ENCODE measurements at regions of chr2 and their contacts with region 1.

Region 1: GRCh38 chr2:54899576-54900200 is 150.6 kb downstream of the RTN4 start:
- DNase-seq: peak in 5 of 9 donors; percentile 6 to 40 (median 16)
- ATAC-seq: peak; percentile 31
- H3K4me3 ChIP-seq: no peak overlapping the region
- H3K4me3 Mint-ChIP-seq: no peak overlapping the region
- H3K27ac ChIP-seq: no peak overlapping the region
- H3K27ac Mint-ChIP-seq: peak overlapping the region in 4 of 9 donors; percentile 9 to 89 (median 72)
- H3K4me1 ChIP-seq: peaks cover 10 to 19% of the 10 kb centered on the region in 2 donors
- H3K4me1 Mint-ChIP-seq: peaks cover 13 to 32% (median 29%) of the 10 kb centered on the region in 7 donors
- H3K27me3 ChIP-seq: no peaks in the 10 kb centered on the region
- H3K27me3 Mint-ChIP-seq: no peaks in the 10 kb centered on the region

Region 2: GRCh38 chr2:54409752-54410151 is 489.9 kb before region 1 on chr2:
- CTCF ChIA-PET with region 1: no interaction called
- POLR2A ChIA-PET with region 1: no interaction called
- intact Hi-C with region 1: no loop called
- DNase-seq: no peak
- ATAC-seq: no peak
- H3K4me3 ChIP-seq: no peak overlapping the region
- H3K4me3 Mint-ChIP-seq: no peak overlapping the region
- H3K27ac ChIP-seq: no peak overlapping the region
- H3K27ac Mint-ChIP-seq: no peak overlapping the region
- H3K4me1 ChIP-seq: no peaks in the 10 kb centered on the region
- H3K4me1 Mint-ChIP-seq: no peaks in the 10 kb centered on the region
- H3K27me3 ChIP-seq: peaks cover 0 to 3% of the 10 kb centered on the region in 2 donors
- H3K27me3 Mint-ChIP-seq: peaks cover 11 to 23% (median 19%) of the 10 kb centered on the region in 5 donors

Region 3: GRCh38 chr2:54866868-54867267 is 32.8 kb before region 1 on chr2:
- CTCF ChIA-PET with region 1: no interaction called
- POLR2A ChIA-PET with region 1: no interaction called
- intact Hi-C with region 1: loop called in 1 of 2 experiments (anchors 2 kb)
- DNase-seq: peak in 1 of 9 donors; percentile 5
- ATAC-seq: peak; percentile 36
- H3K4me3 ChIP-seq: no peak overlapping the region
- H3K4me3 Mint-ChIP-seq: peak overlapping the region in 7 of 10 donors; percentile 3 to 32 (median 17)
- H3K27ac ChIP-seq: no peak overlapping the region
- H3K27ac Mint-ChIP-seq: peak overlapping the region in 7 of 9 donors; percentile 1 to 77 (median 16)
- H3K4me1 ChIP-seq: peaks cover 0 to 13% of the 10 kb centered on the region in 2 donors
- H3K4me1 Mint-ChIP-seq: peaks cover 6 to 20% (median 14%) of the 10 kb centered on the region in 7 donors
- H3K27me3 ChIP-seq: no peaks in the 10 kb centered on the region
- H3K27me3 Mint-ChIP-seq: no peaks in the 10 kb centered on the region

Region 4: DNA sequence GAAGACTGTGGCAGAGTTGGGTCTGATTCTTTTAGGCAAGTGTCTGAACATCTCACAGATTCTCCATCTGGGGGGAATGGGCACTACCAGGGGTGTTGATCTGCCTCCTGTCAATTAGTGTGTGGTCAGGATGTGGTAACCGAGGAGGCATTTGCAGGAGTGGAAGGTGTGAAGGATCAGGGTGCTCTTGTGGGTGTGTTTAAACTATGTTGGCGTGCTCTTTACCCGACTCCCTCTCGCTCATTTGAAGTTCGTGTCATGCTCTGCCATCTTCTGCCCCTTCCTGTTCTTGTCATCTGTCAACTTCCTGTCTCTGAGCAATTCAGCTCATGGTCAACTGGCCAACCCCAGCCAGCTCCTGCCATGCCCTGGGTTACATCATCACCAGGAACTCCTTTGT is 42.7 kb after region 1 on chr2:
- CTCF ChIA-PET with region 1: no interaction called
- POLR2A ChIA-PET with region 1: no interaction called
- intact Hi-C with region 1: loop called in 1 of 2 experiments (anchors 5 kb)
- DNase-seq: peak in 6 of 9 donors; percentile 17 to 61 (median 30)
- ATAC-seq: peak; percentile 85
- H3K4me3 ChIP-seq: no peak overlapping the region
- H3K4me3 Mint-ChIP-seq: no peak overlapping the region
- H3K27ac ChIP-seq: no peak overlapping the region
- H3K27ac Mint-ChIP-seq: no peak overlapping the region
- H3K4me1 ChIP-seq: peaks cover 8 to 16% of the 10 kb centered on the region in 2 donors
- H3K4me1 Mint-ChIP-seq: peaks cover 0 to 12% (median 4%) of the 10 kb centered on the region in 7 donors
- H3K27me3 ChIP-seq: no peaks in the 10 kb centered on the region
- H3K27me3 Mint-ChIP-seq: peaks cover 0 to 4% (median 0%) of the 10 kb centered on the region in 5 donors

Region 5: DNA sequence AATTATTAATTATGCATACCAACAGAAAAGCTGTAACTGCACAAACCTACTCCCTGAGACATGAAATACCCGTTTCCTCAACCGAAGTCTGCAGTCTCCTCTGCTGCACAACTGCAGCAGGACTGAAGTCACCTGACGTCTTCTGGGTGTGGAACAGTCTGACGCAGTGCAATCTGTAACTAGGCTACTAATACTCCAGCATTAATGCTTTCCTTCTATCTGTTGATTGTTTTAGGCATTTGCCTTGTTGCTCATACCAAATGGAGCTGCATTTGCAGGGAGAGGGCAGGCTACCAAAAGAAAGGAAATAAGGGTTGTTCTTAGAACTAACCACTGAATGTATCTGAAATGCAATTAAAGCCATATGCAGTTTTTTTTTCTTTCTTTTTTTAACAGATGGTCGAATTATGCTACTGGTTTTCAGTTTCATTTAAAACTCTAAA is 110.5 kb after region 1 on chr2:
- CTCF ChIA-PET with region 1: interaction called, 11 read pairs
- POLR2A ChIA-PET with region 1: interaction called, 3 read pairs
- intact Hi-C with region 1: loop called (anchors 2 kb)
- DNase-seq: peak; percentile 15 to 71 (median 60)
- ATAC-seq: peak; percentile 94
- H3K4me3 ChIP-seq: peak overlapping the region; percentile 58
- H3K4me3 Mint-ChIP-seq: peak overlapping the region; percentile 88 to 97 (median 92)
- H3K27ac ChIP-seq: peak overlapping the region; percentile 68
- H3K27ac Mint-ChIP-seq: peak overlapping the region; percentile 82 to 96 (median 90)
- H3K4me1 ChIP-seq: peaks cover 27 to 29% of the 10 kb centered on the region in 2 donors
- H3K4me1 Mint-ChIP-seq: peaks cover 44 to 91% (median 79%) of the 10 kb centered on the region in 7 donors
- H3K27me3 ChIP-seq: no peaks in the 10 kb centered on the region
- H3K27me3 Mint-ChIP-seq: no peaks in the 10 kb centered on the region

Region 6: GRCh38 chr2:55014962-55015939 is 115.6 kb after region 1 on chr2:
- CTCF ChIA-PET with region 1: interaction called, 11 read pairs
- POLR2A ChIA-PET with region 1: interaction called, 3 read pairs
- intact Hi-C with region 1: loop called (anchors 2 kb)
- DNase-seq: peak in 7 of 9 donors; percentile 13 to 56 (median 41)
- ATAC-seq: peak; percentile 60
- H3K4me3 ChIP-seq: no peak overlapping the region
- H3K4me3 Mint-ChIP-seq: no peak overlapping the region
- H3K27ac ChIP-seq: no peak overlapping the region
- H3K27ac Mint-ChIP-seq: peak overlapping the region in 3 of 9 donors; percentile 0 to 47 (median 14)
- H3K4me1 ChIP-seq: peaks cover 9 to 10% of the 10 kb centered on the region in 2 donors
- H3K4me1 Mint-ChIP-seq: peaks cover 19 to 66% (median 41%) of the 10 kb centered on the region in 7 donors
- H3K27me3 ChIP-seq: no peaks in the 10 kb centered on the region
- H3K27me3 Mint-ChIP-seq: no peaks in the 10 kb centered on the region

Region 7: DNA sequence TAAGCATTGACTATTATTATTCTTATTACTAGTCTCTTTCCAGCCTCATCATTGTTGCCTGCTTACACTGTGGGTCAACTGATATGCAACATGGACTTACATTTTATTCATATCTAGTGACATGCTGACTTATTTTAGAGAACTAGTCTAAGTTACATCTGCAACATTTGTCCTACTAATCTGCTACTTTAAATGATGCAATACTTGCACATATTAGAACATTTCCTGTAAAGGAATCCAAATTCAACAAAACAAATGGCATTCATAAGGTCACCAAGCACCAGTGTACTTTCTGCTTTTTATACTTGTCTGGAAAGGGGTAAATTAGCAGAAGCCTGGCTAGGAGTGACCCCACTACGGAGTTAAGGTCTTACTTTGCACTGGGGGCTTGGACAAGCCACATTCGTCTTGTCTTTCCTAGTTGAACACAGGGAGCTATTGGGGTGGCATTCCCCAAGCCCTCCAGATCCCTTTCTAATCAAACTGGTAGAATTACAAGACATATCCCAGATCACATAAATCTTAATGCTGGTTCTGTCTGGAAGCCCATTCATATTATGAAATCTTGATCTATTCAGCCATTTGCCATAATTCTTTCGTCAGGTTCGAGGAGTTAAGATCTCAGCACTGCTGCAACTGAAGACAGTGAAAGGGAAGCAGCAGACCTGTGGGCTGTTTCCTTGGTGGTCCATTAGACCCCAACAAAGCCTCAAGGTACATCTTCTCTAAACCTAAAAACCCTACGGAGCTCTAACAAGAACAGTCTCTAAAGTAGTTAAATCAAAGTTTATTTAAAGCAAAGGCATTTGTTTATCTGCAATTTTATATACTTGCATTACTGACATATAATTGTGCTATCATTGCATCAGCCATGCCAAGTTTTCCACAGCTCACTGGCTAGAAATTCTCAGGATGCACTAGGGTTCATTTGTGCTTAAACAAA is 200.5 kb after region 1 on chr2:
- CTCF ChIA-PET with region 1: no interaction called
- POLR2A ChIA-PET with region 1: no interaction called
- intact Hi-C with region 1: no loop called
- DNase-seq: no peak
- ATAC-seq: peak; percentile 42
- H3K4me3 ChIP-seq: no peak overlapping the region
- H3K4me3 Mint-ChIP-seq: peak overlapping the region in 1 of 10 donors; percentile 5
- H3K27ac ChIP-seq: no peak overlapping the region
- H3K27ac Mint-ChIP-seq: no peak overlapping the region
- H3K4me1 ChIP-seq: no peaks in the 10 kb centered on the region
- H3K4me1 Mint-ChIP-seq: peaks cover 0 to 7% (median 4%) of the 10 kb centered on the region in 7 donors
- H3K27me3 ChIP-seq: no peaks in the 10 kb centered on the region
- H3K27me3 Mint-ChIP-seq: no peaks in the 10 kb centered on the region

Region 8: DNA sequence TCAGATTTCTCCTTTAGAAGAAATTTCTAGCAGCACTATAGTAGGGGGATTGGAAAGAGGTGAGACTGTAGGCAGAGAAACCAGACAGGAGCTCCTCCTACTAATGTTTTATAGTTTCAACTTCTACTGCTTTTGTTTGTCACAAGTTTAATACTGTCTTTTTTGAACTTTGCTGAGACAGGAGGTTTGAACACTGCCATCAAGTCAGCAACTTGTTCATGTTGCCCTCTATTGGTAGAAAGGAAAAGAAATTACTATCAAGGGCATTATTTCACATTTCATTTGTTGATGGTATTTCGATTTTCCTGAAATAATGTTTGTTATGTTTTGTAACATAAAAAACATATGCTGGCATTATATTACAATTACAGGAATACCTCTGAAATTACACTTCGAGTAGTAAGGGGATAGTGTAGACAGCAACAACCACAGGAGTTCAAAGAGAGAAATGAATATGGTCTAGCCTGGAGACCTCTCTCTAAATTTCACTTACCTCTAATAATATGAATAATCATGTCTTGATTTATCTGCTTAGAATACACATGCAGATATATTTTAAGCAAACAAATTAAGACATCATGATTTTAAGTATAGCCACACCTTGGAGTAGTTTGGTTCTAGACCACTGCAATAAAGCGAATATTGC is 532.4 kb after region 1 on chr2:
- CTCF ChIA-PET with region 1: no interaction called
- POLR2A ChIA-PET with region 1: no interaction called
- intact Hi-C with region 1: loop called in 1 of 2 experiments (anchors 1 kb)
- DNase-seq: peak in 6 of 9 donors; percentile 6 to 54 (median 32)
- ATAC-seq: peak; percentile 66
- H3K4me3 ChIP-seq: no peak overlapping the region
- H3K4me3 Mint-ChIP-seq: no peak overlapping the region
- H3K27ac ChIP-seq: no peak overlapping the region
- H3K27ac Mint-ChIP-seq: peak overlapping the region in 1 of 9 donors; percentile 39
- H3K4me1 ChIP-seq: no peaks in the 10 kb centered on the region
- H3K4me1 Mint-ChIP-seq: peaks cover 0 to 7% (median 2%) of the 10 kb centered on the region in 7 donors
- H3K27me3 ChIP-seq: no peaks in the 10 kb centered on the region
- H3K27me3 Mint-ChIP-seq: peaks cover 0 to 15% (median 0%) of the 10 kb centered on the region in 5 donors